Activated CD4-positive, alpha-beta memory T cell treated with anti-CD3 and anti-CD28 coated beads for 36 hours (primary cell): ENCODE measurements at regions of chr3 and their contacts with region 1.

Region 1: GRCh38 chr3:150546226-150547044 is at the starts of genes EIF2A and SERP1:
- DNase-seq: peak; percentile 100
- H3K4me3 Mint-ChIP-seq: peak within 1 kb of the TSS; percentile 99
- H3K27ac Mint-ChIP-seq: peak within 1 kb of the TSS; percentile 96
- H3K4me1 Mint-ChIP-seq: peaks cover 58% of the 10 kb centered on the region
- H3K27me3 Mint-ChIP-seq: no peaks in the 10 kb centered on the region
- total RNA-seq, gene EIF2A: 131 to 137 TPM
- total RNA-seq, gene SERP1: 100 to 111 TPM

Region 2: DNA sequence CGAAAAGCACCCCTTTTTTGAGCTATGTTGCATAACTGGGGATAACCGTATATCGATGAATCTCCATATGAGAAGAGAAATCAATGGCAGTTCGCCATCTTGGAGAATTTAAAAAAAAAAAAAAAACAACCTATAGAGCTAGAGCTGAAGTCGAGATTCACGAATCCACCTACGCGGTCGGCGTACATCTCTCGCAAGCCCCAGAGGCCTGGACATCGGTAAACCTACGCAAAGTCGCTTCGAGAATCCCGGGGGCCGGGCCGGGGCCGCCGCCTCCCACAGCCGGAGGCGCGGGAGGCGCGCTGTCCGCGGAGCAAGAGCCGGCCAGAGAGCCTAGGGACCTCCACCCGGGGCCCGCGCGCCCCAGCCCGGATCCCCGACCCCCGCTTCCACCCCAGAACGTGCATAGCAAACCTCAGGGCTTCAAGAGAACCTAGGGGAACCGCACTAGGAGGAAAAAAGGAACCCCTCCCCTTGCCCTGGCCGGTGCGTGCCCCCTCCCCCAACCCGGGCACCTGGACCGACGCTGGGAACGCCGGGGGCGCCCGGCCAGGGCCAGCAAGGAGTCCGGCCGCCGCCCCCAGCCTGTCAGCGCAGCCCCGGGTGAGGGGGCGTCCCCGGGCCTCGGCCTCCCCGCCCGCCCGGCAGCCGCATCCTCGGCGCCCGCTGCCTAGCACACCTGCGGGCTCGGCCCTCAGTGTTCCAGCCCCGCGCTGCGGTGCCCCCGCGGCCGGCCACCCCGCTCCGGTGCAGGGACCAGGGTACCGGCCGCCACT is 576.3 kb before region 1 on chr3:
- CTCF ChIA-PET with region 1: no interaction called
- POLR2A ChIA-PET with region 1: no interaction called
- intact Hi-C with region 1: loop called (anchors 1 kb)
- DNase-seq: peak; percentile 83
- H3K4me3 Mint-ChIP-seq: peak overlapping the region; percentile 77
- H3K27ac Mint-ChIP-seq: no peak overlapping the region
- H3K4me1 Mint-ChIP-seq: peaks cover 11% of the 10 kb centered on the region
- H3K27me3 Mint-ChIP-seq: peaks cover 21% of the 10 kb centered on the region

Region 3: GRCh38 chr3:150603153-150603979 is 56.9 kb after region 1 on chr3 and contains the start of gene SELENOT:
- CTCF ChIA-PET with region 1: interaction called, 4 read pairs
- POLR2A ChIA-PET with region 1: interaction called, 8 read pairs
- intact Hi-C with region 1: loop called (anchors 1 kb)
- DNase-seq: peak; percentile 96
- H3K4me3 Mint-ChIP-seq: peak within 1 kb of the TSS; percentile 96
- H3K27ac Mint-ChIP-seq: peak within 1 kb of the TSS; percentile 97
- H3K4me1 Mint-ChIP-seq: peaks cover 51% of the 10 kb centered on the region
- H3K27me3 Mint-ChIP-seq: no peaks in the 10 kb centered on the region
- total RNA-seq, gene SELENOT: 105 to 111 TPM

Region 4: GRCh38 chr3:150673966-150674365 is 127.5 kb after region 1 on chr3:
- CTCF ChIA-PET with region 1: no interaction called
- POLR2A ChIA-PET with region 1: no interaction called
- intact Hi-C with region 1: no loop called
- DNase-seq: no peak
- H3K4me3 Mint-ChIP-seq: no peak overlapping the region
- H3K27ac Mint-ChIP-seq: no peak overlapping the region
- H3K4me1 Mint-ChIP-seq: peaks cover 5% of the 10 kb centered on the region
- H3K27me3 Mint-ChIP-seq: peaks cover 2% of the 10 kb centered on the region

Region 5: GRCh38 chr3:150703299-150704134 is 157.1 kb after region 1 on chr3 and contains the start of gene ERICH6:
- CTCF ChIA-PET with region 1: no interaction called
- POLR2A ChIA-PET with region 1: no interaction called
- intact Hi-C with region 1: loop called (anchors 1 kb)
- DNase-seq: peak; percentile 92
- H3K4me3 Mint-ChIP-seq: peak within 1 kb of the TSS; percentile 89
- H3K27ac Mint-ChIP-seq: peak within 1 kb of the TSS; percentile 81
- H3K4me1 Mint-ChIP-seq: peaks cover 21% of the 10 kb centered on the region
- H3K27me3 Mint-ChIP-seq: no peaks in the 10 kb centered on the region
- total RNA-seq, gene ERICH6: not detected

Region 6: DNA sequence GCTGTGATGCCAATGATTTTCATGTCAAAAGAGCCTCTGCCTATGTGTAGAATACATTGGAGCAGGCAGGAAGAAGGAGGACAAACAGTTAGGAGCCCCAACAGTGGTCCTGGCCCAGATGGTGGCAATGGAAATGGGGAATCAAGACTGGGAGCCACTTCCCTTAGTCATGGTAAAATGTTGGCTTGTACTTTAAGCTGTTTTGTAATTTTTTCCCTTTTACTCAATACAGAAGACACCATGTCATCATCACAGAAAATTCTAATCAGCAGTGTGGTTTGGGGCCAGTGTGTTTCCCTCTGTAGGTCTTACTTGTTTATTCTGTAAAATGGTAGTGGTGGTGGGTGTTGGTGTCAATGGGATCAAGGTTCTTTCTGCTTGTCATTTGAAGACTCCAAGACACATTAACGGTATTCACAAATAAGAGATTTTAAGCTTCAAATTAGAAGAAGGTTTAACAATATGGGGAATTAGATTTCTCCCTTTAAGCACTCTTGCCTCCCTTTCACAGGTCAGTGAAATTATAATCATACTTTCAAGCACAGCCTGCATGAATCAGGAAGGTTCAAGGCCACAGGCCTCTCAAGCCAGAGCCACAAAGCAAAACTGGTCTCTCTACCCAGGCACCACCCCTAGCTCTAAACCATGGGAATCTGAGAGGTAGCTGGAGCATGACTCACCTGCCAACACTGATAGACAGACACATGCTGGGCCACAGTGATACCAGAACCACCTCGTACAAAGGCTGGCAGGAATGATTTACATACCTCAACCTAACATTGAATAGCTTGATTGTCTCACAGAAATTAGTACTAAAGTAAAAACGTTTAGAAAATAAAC is 191.7 kb after region 1 on chr3:
- CTCF ChIA-PET with region 1: interaction called, 3 read pairs
- POLR2A ChIA-PET with region 1: interaction called, 9 read pairs
- intact Hi-C with region 1: loop called (anchors 1 kb)
- DNase-seq: peak; percentile 79
- H3K4me3 Mint-ChIP-seq: peak overlapping the region; percentile 38
- H3K27ac Mint-ChIP-seq: peak overlapping the region; percentile 99
- H3K4me1 Mint-ChIP-seq: peaks cover 73% of the 10 kb centered on the region
- H3K27me3 Mint-ChIP-seq: no peaks in the 10 kb centered on the region

Region 7: GRCh38 chr3:150850191-150850590 is 303.8 kb after region 1 on chr3:
- CTCF ChIA-PET with region 1: no interaction called
- POLR2A ChIA-PET with region 1: no interaction called
- intact Hi-C with region 1: no loop called
- DNase-seq: no peak
- H3K4me3 Mint-ChIP-seq: no peak overlapping the region
- H3K27ac Mint-ChIP-seq: no peak overlapping the region
- H3K4me1 Mint-ChIP-seq: no peaks in the 10 kb centered on the region
- H3K27me3 Mint-ChIP-seq: peaks cover 5% of the 10 kb centered on the region

Region 8: GRCh38 chr3:151210676-151211381 is 664.4 kb after region 1 on chr3:
- CTCF ChIA-PET with region 1: no interaction called
- POLR2A ChIA-PET with region 1: no interaction called
- intact Hi-C with region 1: loop called (anchors 1 kb)
- DNase-seq: no peak
- H3K4me3 Mint-ChIP-seq: peak overlapping the region; percentile 62
- H3K27ac Mint-ChIP-seq: peak overlapping the region; percentile 91
- H3K4me1 Mint-ChIP-seq: peaks cover 61% of the 10 kb centered on the region
- H3K27me3 Mint-ChIP-seq: no peaks in the 10 kb centered on the region